CD4-positive, alpha-beta memory T cell (primary cell): ENCODE measurements at regions of chr19 and their contacts with region 1.

Region 1: DNA sequence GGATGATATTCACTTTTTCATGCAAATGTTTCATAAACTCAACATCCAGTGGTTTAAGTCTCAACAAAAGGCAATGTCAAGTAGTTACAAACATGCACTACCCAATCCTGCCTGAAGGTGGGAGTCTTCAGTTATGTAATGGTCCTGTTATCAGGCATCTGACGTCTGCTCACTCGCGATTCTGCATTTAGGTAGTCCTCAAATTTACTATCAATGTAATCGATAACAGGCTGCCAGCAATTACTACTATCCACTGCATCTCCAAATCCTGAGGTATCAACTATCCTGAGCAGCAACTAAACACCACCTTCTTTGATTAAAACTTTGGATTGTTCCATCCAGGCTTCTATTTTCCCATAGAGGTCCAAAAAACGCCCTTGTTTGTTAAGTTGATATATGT is 51.2 kb downstream of the NLRP12 start:
- DNase-seq: peak; percentile 32 to 47 (median 46)
- H3K4me3 ChIP-seq: no peak overlapping the region
- H3K4me3 Mint-ChIP-seq: peak overlapping the region in 1 of 8 donors; percentile 18
- H3K27ac ChIP-seq: no peak overlapping the region
- H3K27ac Mint-ChIP-seq: no peak overlapping the region
- H3K4me1 ChIP-seq: no peaks in the 10 kb centered on the region
- H3K4me1 Mint-ChIP-seq: peaks cover 0 to 5% (median 2%) of the 10 kb centered on the region in 4 donors
- H3K27me3 ChIP-seq: no peaks in the 10 kb centered on the region
- H3K27me3 Mint-ChIP-seq: peaks cover 0 to 6% of the 10 kb centered on the region in 2 donors

Region 2: DNA sequence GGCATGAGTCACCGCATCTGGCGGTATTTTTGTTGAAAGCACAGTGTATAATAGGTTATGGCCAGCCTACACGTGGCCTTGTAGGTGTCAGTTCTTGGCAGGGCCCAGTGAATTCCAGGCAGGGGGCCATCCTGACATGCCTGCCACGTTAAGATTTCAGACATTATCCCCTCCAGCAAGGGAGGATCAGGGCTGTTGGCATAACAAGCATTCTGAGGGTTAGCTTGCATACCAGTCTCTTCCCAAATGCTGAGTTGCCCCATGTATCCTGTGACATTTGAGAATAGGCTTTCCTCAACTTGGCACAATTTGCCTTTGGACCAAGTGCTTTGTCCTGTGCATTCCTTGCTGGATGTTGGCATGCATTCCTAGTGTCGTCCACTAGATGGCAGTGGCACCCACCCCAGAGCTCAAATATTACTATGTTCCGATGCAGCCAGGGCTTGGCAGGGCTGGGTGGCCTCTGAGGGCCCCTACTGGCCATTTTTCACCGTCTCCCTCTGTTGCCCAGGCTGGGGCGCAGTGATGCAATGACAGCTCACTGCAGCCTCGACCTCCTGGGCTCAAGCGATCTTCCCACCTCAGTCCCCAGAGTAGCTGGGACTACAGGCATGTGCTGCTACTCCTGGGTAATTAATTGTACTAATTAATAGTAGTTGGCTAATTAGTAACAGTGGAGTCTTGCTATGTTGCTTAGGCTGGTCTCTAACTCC is 19.9 kb after region 1 on chr19:
- CTCF ChIA-PET with region 1: interaction called, 5 read pairs
- POLR2A ChIA-PET with region 1: no interaction called
- intact Hi-C with region 1: loop called (anchors 1 kb)
- DNase-seq: peak; percentile 67 to 74 (median 71)
- H3K4me3 ChIP-seq: no peak overlapping the region
- H3K4me3 Mint-ChIP-seq: no peak overlapping the region
- H3K27ac ChIP-seq: no peak overlapping the region
- H3K27ac Mint-ChIP-seq: no peak overlapping the region
- H3K4me1 ChIP-seq: no peaks in the 10 kb centered on the region
- H3K4me1 Mint-ChIP-seq: peaks cover 0 to 5% (median 3%) of the 10 kb centered on the region in 4 donors
- H3K27me3 ChIP-seq: no peaks in the 10 kb centered on the region
- H3K27me3 Mint-ChIP-seq: peaks cover 2 to 4% of the 10 kb centered on the region in 2 donors

Region 3: GRCh38 chr19:53808710-53809125 is 35.8 kb after region 1 on chr19:
- CTCF ChIA-PET with region 1: no interaction called
- POLR2A ChIA-PET with region 1: no interaction called
- intact Hi-C with region 1: no loop called
- DNase-seq: no peak
- H3K4me3 ChIP-seq: no peak overlapping the region
- H3K4me3 Mint-ChIP-seq: no peak overlapping the region
- H3K27ac ChIP-seq: no peak overlapping the region
- H3K27ac Mint-ChIP-seq: no peak overlapping the region
- H3K4me1 ChIP-seq: no peaks in the 10 kb centered on the region
- H3K4me1 Mint-ChIP-seq: no peaks in the 10 kb centered on the region
- H3K27me3 ChIP-seq: no peaks in the 10 kb centered on the region
- H3K27me3 Mint-ChIP-seq: peaks cover 0 to 2% of the 10 kb centered on the region in 2 donors

Region 4: DNA sequence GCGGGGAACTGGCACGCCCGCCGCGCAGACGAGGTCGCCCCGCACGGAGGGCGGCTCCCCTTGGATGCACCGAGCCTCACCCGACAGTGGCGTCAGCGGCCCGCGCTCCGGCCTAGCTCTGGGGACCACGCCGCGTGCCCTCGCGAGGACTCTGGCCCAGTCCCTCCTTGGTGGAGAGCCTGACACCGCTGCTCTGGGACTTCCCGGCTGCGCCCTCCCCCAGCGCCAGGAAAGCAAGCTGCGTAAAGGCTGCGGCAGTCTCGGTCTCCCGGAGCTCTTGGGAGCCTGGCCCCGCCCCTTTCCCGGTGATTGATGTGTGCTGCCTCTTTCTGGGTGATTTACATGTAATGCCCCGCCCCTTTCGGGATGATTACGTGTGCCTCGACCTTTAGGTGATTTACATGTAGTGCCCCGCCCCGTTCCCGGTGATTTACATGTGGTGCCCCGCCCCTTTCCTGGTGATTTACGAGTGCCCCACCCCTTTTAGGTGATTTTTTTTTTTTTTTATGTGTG is 690.6 kb after region 1 on chr19 and contains the start of gene LENG9:
- CTCF ChIA-PET with region 1: no interaction called
- POLR2A ChIA-PET with region 1: no interaction called
- intact Hi-C with region 1: no loop called
- DNase-seq: peak; percentile 86 to 99 (median 91)
- H3K4me3 ChIP-seq: peak within 1 kb of the TSS; percentile 65 to 85
- H3K4me3 Mint-ChIP-seq: peak within 1 kb of the TSS; percentile 84 to 92 (median 89)
- H3K27ac ChIP-seq: peak within 1 kb of the TSS; percentile 81
- H3K27ac Mint-ChIP-seq: peak within 1 kb of the TSS; percentile 92 to 99 (median 95)
- H3K4me1 ChIP-seq: peaks cover 27% of the 10 kb centered on the region
- H3K4me1 Mint-ChIP-seq: peaks cover 15 to 37% (median 27%) of the 10 kb centered on the region in 4 donors
- H3K27me3 ChIP-seq: no peaks in the 10 kb centered on the region
- H3K27me3 Mint-ChIP-seq: peaks cover 0 to 2% of the 10 kb centered on the region in 2 donors
- total RNA-seq, gene LENG9: 7.2 to 7.3 TPM